H1 (cell line): ENCODE measurements at regions of chr9 and their contacts with region 1.

Region 1: DNA sequence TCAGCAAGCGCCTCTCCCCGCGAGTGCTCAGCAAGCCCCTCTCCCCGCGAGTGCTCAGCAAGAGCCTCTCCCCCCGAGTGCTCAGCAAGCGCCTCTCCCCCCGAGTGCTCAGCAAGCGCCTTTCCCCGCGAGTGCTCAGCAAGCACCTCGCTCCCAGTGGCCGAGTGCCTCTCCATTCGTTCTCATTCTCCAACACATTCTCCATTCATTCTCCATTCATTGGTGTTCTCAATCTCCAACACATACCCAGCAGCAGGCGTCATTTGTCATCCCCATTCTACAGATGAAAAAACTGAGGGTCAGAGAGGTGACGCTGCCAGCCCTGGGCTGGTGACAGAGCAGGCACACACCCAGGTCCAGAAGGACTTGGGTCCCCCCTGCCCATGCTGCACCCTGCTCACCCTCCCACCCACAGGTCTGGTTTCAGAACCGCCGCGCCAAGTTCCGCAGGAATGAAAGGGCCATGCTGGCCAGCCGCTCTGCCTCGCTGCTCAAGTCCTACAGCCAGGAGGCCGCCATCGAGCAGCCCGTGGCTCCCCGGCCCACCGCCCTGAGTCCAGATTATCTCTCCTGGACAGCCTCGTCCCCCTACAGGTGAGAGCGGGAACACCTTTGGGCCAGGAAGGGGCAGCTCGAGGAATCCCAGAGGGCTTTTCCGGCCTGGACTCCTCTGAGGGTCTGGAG is 32.5 kb downstream of the PTGES start:
- DNase-seq: peak in 1 of 2 experiments; percentile 84
- H3K4me3 ChIP-seq: no peak overlapping the region
- H3K27ac ChIP-seq: no peak overlapping the region
- H3K4me1 ChIP-seq: peaks cover 0 to 3% (median 0%) of the 10 kb centered on the region in 4 experiments; a peak in 1 of 7 replicates
- H3K27me3 ChIP-seq: 0 out of 7 replicates have a peak, but pooled peaks cover 0 to 4% (median 0%) of the 10 kb centered on the region in 4 experiments
- CTCF ChIP-seq: peak; percentile 81 to 86 (median 81)
- EP300 ChIP-seq: no peak
- POLR2A ChIP-seq: no peak
- RAD21 ChIP-seq: peak; percentile 32 to 58; a peak in 3 of 4 replicates

Region 2: GRCh38 chr9:129536041-129536440 is 184.3 kb before region 1 on chr9:
- CTCF ChIA-PET with region 1: no interaction called
- POLR2A ChIA-PET with region 1: no interaction called
- DNase-seq: no peak
- H3K4me3 ChIP-seq: no peak overlapping the region
- H3K27ac ChIP-seq: no peak overlapping the region
- H3K4me1 ChIP-seq: no peaks in the 10 kb centered on the region
- H3K27me3 ChIP-seq: no peaks in the 10 kb centered on the region; a peak in 1 of 7 replicates
- CTCF ChIP-seq: no peak
- EP300 ChIP-seq: no peak
- POLR2A ChIP-seq: no peak
- RAD21 ChIP-seq: no peak

Region 3: GRCh38 chr9:129641746-129642513 is 78.4 kb before region 1 on chr9 and contains the start of gene ASB6:
- CTCF ChIA-PET with region 1: interaction called, 21 read pairs
- POLR2A ChIA-PET with region 1: no interaction called
- DNase-seq: peak; percentile 83 to 100
- H3K4me3 ChIP-seq: peak within 1 kb of the TSS; percentile 66 to 98 (median 84)
- H3K27ac ChIP-seq: no peak within 1 kb of the TSS
- H3K4me1 ChIP-seq: peaks cover 0 to 10% (median 6%) of the 10 kb centered on the region in 4 experiments; a peak in 4 of 7 replicates
- H3K27me3 ChIP-seq: no peaks in the 10 kb centered on the region
- CTCF ChIP-seq: peak in 1 of 3 experiments; percentile 97; a peak in 3 of 4 replicates
- EP300 ChIP-seq: peak in 1 of 2 experiments; percentile 73; a peak in 1 of 3 replicates
- POLR2A ChIP-seq: peak in 1 of 2 experiments; percentile 62; a peak in 1 of 3 replicates
- RAD21 ChIP-seq: peak; percentile 92 to 93
- total RNA-seq, gene ASB6: 17.3 TPM in 2 replicates

Region 4: GRCh38 chr9:129656795-129657390 is 63.4 kb before region 1 on chr9:
- CTCF ChIA-PET with region 1: interaction called, 14 read pairs
- POLR2A ChIA-PET with region 1: no interaction called
- DNase-seq: no peak
- H3K4me3 ChIP-seq: no peak overlapping the region
- H3K27ac ChIP-seq: no peak overlapping the region
- H3K4me1 ChIP-seq: no peaks in the 10 kb centered on the region
- H3K27me3 ChIP-seq: no peaks in the 10 kb centered on the region; a peak in 1 of 7 replicates
- CTCF ChIP-seq: no peak
- EP300 ChIP-seq: no peak
- POLR2A ChIP-seq: no peak
- RAD21 ChIP-seq: no peak

Region 5: DNA sequence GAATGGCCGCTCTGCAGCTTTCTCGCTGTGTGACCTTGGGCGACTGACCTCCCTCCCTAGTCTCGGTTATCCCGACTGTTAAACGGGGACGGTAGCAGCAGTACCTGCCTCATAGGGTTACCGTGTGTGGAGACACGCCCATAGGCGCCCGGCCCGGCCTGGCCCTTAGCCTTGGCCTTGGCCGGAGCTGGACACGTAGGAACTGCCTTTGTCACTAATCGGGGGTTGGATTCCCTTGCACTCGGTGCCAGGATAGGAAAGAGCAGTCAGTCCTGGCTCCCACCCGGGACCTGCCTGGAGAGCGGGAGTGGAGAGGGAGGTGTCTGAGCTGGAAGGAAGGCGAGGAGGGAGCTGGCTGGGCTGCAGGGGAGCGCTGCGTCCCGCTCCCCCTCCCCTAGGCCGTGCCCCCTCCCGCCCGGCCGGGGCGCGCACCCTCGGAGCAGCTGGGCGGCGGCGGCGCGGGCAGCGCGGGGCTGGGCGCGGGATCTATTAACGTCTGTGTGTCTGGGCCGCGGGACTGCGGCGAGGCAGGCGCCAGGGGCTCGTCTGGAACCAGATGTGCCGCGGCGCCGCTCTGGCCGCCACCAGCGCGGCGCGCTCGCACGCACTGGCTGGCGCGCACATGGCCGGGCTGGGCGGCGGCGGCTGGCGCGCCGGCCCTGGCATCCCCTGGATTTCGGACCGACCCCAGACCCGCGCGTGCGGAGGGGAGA is 23.2 kb before region 1 on chr9:
- CTCF ChIA-PET with region 1: interaction called, 22 read pairs
- POLR2A ChIA-PET with region 1: no interaction called
- DNase-seq: peak in 1 of 2 experiments; percentile 80
- H3K4me3 ChIP-seq: peak overlapping the region; percentile 53 to 80 (median 60)
- H3K27ac ChIP-seq: no peak overlapping the region
- H3K4me1 ChIP-seq: peaks cover 0 to 9% (median 7%) of the 10 kb centered on the region in 4 experiments; a peak in 5 of 7 replicates
- H3K27me3 ChIP-seq: peaks cover 0 to 18% (median 9%) of the 10 kb centered on the region in 4 experiments; a peak in 3 of 7 replicates
- CTCF ChIP-seq: no peak
- EP300 ChIP-seq: no peak
- POLR2A ChIP-seq: peak in 1 of 2 experiments; percentile 67; a peak in 2 of 3 replicates
- RAD21 ChIP-seq: no peak

Region 6: GRCh38 chr9:129702589-129703520 is 17.5 kb before region 1 on chr9:
- CTCF ChIA-PET with region 1: interaction called, 22 read pairs
- POLR2A ChIA-PET with region 1: interaction called, 3 read pairs
- DNase-seq: no peak
- H3K4me3 ChIP-seq: no peak overlapping the region
- H3K27ac ChIP-seq: no peak overlapping the region
- H3K4me1 ChIP-seq: peaks cover 0 to 8% (median 5%) of the 10 kb centered on the region in 4 experiments; a peak in 5 of 7 replicates
- H3K27me3 ChIP-seq: peaks cover 0 to 4% (median 3%) of the 10 kb centered on the region in 4 experiments; a peak in 2 of 7 replicates
- CTCF ChIP-seq: no peak
- EP300 ChIP-seq: no peak
- POLR2A ChIP-seq: no peak
- RAD21 ChIP-seq: no peak

Region 7: DNA sequence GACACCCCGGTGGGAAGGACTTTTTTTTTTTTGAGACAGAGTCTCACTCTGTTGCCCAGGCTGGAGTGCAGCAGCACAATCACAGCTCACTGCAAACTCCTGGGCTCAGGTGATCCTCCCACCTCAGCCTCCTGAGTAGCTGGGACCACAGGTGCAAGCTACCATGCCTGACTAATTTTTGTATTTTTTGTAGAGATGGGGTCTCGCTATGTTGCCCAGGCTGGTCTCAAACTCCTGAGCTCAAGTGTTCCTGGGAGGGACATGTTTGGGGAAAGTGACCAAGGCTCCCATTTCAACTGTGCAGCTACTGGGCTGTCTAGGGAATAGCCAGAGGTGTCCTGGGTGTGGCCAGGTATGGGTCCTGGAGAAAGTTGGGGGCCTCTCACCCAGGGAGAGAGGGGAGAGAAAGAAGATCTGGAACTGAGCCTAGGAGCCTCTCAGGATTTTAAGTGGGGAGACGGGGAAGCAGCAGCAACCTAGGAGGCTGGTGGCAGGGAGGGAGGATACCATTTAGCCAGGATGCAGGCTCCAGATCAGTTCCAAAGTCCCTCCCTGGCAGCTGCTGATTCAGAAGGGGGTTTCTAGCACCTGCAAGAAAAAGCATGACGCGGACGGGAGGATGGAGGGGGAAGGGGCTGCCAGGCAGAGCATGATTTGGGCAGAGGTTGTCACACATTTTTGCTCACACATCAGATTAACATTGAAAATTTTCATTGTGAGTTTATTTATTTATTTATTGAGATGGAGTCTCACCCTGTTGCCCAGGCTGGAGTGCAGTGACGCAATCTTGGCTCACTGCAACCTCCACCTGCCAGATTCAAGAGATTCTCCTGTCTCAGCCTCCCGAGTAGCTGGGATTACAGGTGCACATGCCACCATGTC is 75.9 kb after region 1 on chr9:
- CTCF ChIA-PET with region 1: interaction called, 40 read pairs
- POLR2A ChIA-PET with region 1: no interaction called
- DNase-seq: no peak
- H3K4me3 ChIP-seq: no peak overlapping the region
- H3K27ac ChIP-seq: no peak overlapping the region
- H3K4me1 ChIP-seq: no peaks in the 10 kb centered on the region
- H3K27me3 ChIP-seq: peaks cover 0 to 4% (median 0%) of the 10 kb centered on the region in 4 experiments; a peak in 1 of 7 replicates
- CTCF ChIP-seq: no peak
- EP300 ChIP-seq: no peak
- POLR2A ChIP-seq: no peak
- RAD21 ChIP-seq: no peak

Region 8: DNA sequence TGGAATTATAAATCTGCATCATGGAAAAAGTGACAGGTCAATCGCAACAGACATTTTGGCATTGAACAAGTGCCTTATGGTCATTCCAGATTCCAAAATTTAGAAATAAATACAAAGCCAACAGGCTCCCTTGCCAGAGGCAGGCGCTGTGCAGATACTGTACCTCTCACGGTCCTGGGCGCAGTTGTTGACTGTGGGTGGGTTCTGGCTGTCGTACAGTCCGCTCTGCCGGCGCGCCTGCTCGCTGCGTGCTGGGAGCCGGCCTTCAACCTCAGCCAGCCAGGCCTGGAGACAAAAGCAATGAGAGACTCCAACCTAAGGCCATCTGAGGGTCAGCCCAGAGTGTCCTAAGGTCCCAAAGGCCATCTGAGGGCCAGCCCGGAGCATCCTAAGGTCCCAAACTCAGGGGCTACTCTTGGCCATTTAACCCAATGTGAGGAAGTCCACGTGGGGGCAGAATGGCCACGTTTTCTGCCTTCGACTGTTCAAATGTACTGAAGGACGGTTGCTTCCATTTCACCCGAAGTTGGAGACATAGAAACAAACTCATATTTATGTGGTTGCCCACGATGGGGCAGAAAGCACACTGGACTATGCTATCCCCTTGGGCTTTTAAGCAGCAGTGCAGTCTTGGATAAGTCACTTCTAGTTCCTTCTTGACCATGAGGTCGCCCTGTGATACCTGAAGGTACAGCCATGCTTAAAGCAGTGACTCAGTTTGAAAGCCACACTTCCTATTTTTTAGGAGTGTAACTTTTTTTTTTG is 180.1 kb after region 1 on chr9:
- CTCF ChIA-PET with region 1: no interaction called
- POLR2A ChIA-PET with region 1: no interaction called
- DNase-seq: no peak
- H3K4me3 ChIP-seq: no peak overlapping the region
- H3K27ac ChIP-seq: no peak overlapping the region
- H3K4me1 ChIP-seq: peaks cover 0 to 2% (median 0%) of the 10 kb centered on the region in 4 experiments; a peak in 1 of 7 replicates
- H3K27me3 ChIP-seq: no peaks in the 10 kb centered on the region
- CTCF ChIP-seq: no peak
- EP300 ChIP-seq: no peak
- POLR2A ChIP-seq: no peak
- RAD21 ChIP-seq: no peak